CD8-positive, alpha-beta T cell (primary cell): ENCODE measurements at regions of chr16 and their contacts with region 1.

Region 1: GRCh38 chr16:75198135-75198600 is 8.8 kb downstream of the CTRB2 start:
- DNase-seq: no peak
- ATAC-seq: no peak
- H3K4me3 ChIP-seq: no peak overlapping the region
- H3K4me3 Mint-ChIP-seq: no peak overlapping the region
- H3K27ac ChIP-seq: no peak overlapping the region
- H3K27ac Mint-ChIP-seq: no peak overlapping the region
- H3K4me1 ChIP-seq: peaks cover 14% of the 10 kb centered on the region
- H3K4me1 Mint-ChIP-seq: peaks cover 18% of the 10 kb centered on the region
- H3K27me3 ChIP-seq: no peaks in the 10 kb centered on the region
- H3K27me3 Mint-ChIP-seq: peaks cover 25% of the 10 kb centered on the region
- CTCF ChIP-seq: no peak

Region 2: GRCh38 chr16:75218256-75219070 is 20.3 kb after region 1 on chr16 and contains the start of gene CTRB1:
- CTCF ChIA-PET with region 1: interaction called, 22 read pairs
- POLR2A ChIA-PET with region 1: no interaction called
- intact Hi-C with region 1: loop called in 1 of 2 experiments (anchors 2 kb)
- DNase-seq: no peak
- ATAC-seq: no peak
- H3K4me3 ChIP-seq: peak within 1 kb of the TSS; percentile 10 to 42
- H3K4me3 Mint-ChIP-seq: peak within 1 kb of the TSS; percentile 87
- H3K27ac ChIP-seq: no peak within 1 kb of the TSS
- H3K27ac Mint-ChIP-seq: peak within 1 kb of the TSS; percentile 83
- H3K4me1 ChIP-seq: peaks cover 8% of the 10 kb centered on the region
- H3K4me1 Mint-ChIP-seq: peaks cover 10% of the 10 kb centered on the region
- H3K27me3 ChIP-seq: no peaks in the 10 kb centered on the region
- H3K27me3 Mint-ChIP-seq: no peaks in the 10 kb centered on the region
- CTCF ChIP-seq: no peak
- total RNA-seq, gene CTRB1: not detected

Region 3: GRCh38 chr16:75379911-75380847 is 182.0 kb after region 1 on chr16:
- CTCF ChIA-PET with region 1: interaction called, 71 read pairs
- POLR2A ChIA-PET with region 1: no interaction called
- intact Hi-C with region 1: loop called (anchors 1 kb)
- DNase-seq: peak in 8 of 9 experiments; percentile 14 to 71 (median 42)
- ATAC-seq: peak; percentile 83
- H3K4me3 ChIP-seq: no peak overlapping the region
- H3K4me3 Mint-ChIP-seq: peak overlapping the region; percentile 81
- H3K27ac ChIP-seq: no peak overlapping the region
- H3K27ac Mint-ChIP-seq: peak overlapping the region; percentile 80
- H3K4me1 ChIP-seq: peaks cover 20% of the 10 kb centered on the region
- H3K4me1 Mint-ChIP-seq: peaks cover 33% of the 10 kb centered on the region
- H3K27me3 ChIP-seq: no peaks in the 10 kb centered on the region
- H3K27me3 Mint-ChIP-seq: no peaks in the 10 kb centered on the region
- CTCF ChIP-seq: no peak

Region 4: DNA sequence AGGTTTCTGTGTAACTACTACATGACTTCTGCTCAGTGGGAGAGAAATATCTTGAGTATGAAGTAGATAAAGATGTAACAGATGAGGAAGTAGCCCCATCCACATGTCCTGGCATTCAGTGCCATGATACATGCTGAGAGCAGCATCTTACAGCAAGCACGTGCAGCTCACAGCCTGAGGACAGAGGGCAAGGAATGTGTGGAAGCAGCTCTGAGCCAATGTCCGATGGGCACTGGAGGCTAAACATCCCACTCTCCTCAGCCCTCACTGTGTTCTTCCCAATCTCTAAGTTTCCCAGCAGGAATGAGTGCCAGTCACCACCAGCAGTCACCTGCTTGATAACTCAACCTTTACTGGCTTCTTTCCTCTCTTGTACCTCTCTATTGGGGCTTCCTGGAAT is 194.7 kb after region 1 on chr16:
- CTCF ChIA-PET with region 1: interaction called, 71 read pairs
- POLR2A ChIA-PET with region 1: interaction called, 4 read pairs
- intact Hi-C with region 1: no loop called
- DNase-seq: no peak
- ATAC-seq: no peak
- H3K4me3 ChIP-seq: no peak overlapping the region
- H3K4me3 Mint-ChIP-seq: no peak overlapping the region
- H3K27ac ChIP-seq: no peak overlapping the region
- H3K27ac Mint-ChIP-seq: no peak overlapping the region
- H3K4me1 ChIP-seq: no peaks in the 10 kb centered on the region
- H3K4me1 Mint-ChIP-seq: no peaks in the 10 kb centered on the region
- H3K27me3 ChIP-seq: no peaks in the 10 kb centered on the region
- H3K27me3 Mint-ChIP-seq: no peaks in the 10 kb centered on the region
- CTCF ChIP-seq: no peak

Region 5: GRCh38 chr16:75764154-75764768 is 566.1 kb after region 1 on chr16:
- CTCF ChIA-PET with region 1: interaction called, 8 read pairs
- POLR2A ChIA-PET with region 1: interaction called, 4 read pairs
- intact Hi-C with region 1: loop called (anchors 1 kb)
- DNase-seq: peak; percentile 24 to 83 (median 53)
- ATAC-seq: peak; percentile 99
- H3K4me3 ChIP-seq: no peak overlapping the region
- H3K4me3 Mint-ChIP-seq: no peak overlapping the region
- H3K27ac ChIP-seq: no peak overlapping the region
- H3K27ac Mint-ChIP-seq: no peak overlapping the region
- H3K4me1 ChIP-seq: no peaks in the 10 kb centered on the region
- H3K4me1 Mint-ChIP-seq: no peaks in the 10 kb centered on the region
- H3K27me3 ChIP-seq: no peaks in the 10 kb centered on the region
- H3K27me3 Mint-ChIP-seq: peaks cover 2% of the 10 kb centered on the region
- CTCF ChIP-seq: peak; percentile 83